Breast epithelium (tissue), 4 donors: ENCODE measurements at regions of chr1 and their contacts with region 1.

Region 1: DNA sequence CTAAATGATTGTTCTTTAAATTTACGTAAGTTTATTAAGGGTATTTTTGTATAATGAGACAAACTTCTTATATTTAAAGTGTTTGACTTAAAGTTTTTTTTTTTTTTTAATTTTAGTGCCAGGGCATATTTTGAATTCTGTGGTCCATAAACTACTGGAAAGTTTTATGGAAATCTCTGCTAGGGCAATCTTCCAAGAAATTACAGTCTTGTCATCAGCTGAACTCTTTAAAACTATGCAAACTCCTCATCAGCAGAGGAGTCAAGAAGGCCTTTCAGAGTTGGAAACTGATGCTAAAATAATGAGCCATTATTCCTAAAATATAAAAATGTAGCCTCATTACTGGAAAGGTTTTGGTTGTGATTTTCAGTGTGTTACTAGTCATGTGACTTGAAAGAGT is 1201.9 kb downstream of the BRINP3 start:
- DNase-seq: no peak
- H3K4me3 ChIP-seq: no peak overlapping the region
- H3K27ac ChIP-seq: no peak overlapping the region
- H3K4me1 ChIP-seq: no peaks in the 10 kb centered on the region
- H3K27me3 ChIP-seq: no peaks in the 10 kb centered on the region
- CTCF ChIP-seq: no peak
- POLR2A ChIP-seq: no peak

Region 2: DNA sequence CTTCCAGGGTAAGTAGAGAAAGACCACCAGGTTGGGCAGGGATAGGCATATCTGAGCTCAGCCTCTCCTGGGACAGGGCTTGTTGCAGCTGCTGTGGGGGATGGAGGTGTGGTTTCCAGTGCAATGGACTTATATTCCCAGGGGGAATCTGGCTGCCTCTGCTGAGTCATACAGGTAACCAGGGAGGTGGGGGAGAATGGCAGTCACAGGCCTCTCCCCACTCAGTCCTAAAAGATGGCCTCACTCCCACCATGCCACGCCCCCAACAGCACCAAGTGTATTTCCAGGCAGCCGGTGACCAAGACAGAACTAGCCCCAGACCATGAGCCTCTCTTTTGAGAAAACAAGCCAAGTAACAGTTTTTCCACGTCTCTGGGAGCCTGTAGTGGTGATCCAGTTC is 38.8 kb before region 1 on chr1:
- intact Hi-C with region 1: no loop called
- DNase-seq: no peak
- H3K4me3 ChIP-seq: no peak overlapping the region
- H3K27ac ChIP-seq: no peak overlapping the region
- H3K4me1 ChIP-seq: no peaks in the 10 kb centered on the region
- H3K27me3 ChIP-seq: peaks cover 0 to 2% of the 10 kb centered on the region in 2 donors
- CTCF ChIP-seq: no peak
- POLR2A ChIP-seq: no peak

Region 3: GRCh38 chr1:189899686-189900440 is 624.1 kb after region 1 on chr1:
- intact Hi-C with region 1: loop called (anchors 10 kb)
- DNase-seq: no peak
- H3K4me3 ChIP-seq: no peak overlapping the region
- H3K27ac ChIP-seq: no peak overlapping the region
- H3K4me1 ChIP-seq: no peaks in the 10 kb centered on the region
- H3K27me3 ChIP-seq: no peaks in the 10 kb centered on the region
- CTCF ChIP-seq: no peak
- POLR2A ChIP-seq: no peak